Breast epithelium (tissue), 4 donors: ENCODE measurements at regions of chr14 and their contacts with region 1.

Region 1: GRCh38 chr14:73785873-73786695 is 65.5 kb upstream of the PTGR2 start:
- DNase-seq: peak; percentile 70 to 76
- H3K4me3 ChIP-seq: peak overlapping the region; percentile 73 to 80 (median 76)
- H3K27ac ChIP-seq: peak overlapping the region; percentile 97 to 98
- H3K4me1 ChIP-seq: peaks cover 30 to 45% of the 10 kb centered on the region in 2 donors
- H3K27me3 ChIP-seq: no peaks in the 10 kb centered on the region
- CTCF ChIP-seq: peak; percentile 60 to 75 (median 60)
- POLR2A ChIP-seq: peak; percentile 74

Region 2: DNA sequence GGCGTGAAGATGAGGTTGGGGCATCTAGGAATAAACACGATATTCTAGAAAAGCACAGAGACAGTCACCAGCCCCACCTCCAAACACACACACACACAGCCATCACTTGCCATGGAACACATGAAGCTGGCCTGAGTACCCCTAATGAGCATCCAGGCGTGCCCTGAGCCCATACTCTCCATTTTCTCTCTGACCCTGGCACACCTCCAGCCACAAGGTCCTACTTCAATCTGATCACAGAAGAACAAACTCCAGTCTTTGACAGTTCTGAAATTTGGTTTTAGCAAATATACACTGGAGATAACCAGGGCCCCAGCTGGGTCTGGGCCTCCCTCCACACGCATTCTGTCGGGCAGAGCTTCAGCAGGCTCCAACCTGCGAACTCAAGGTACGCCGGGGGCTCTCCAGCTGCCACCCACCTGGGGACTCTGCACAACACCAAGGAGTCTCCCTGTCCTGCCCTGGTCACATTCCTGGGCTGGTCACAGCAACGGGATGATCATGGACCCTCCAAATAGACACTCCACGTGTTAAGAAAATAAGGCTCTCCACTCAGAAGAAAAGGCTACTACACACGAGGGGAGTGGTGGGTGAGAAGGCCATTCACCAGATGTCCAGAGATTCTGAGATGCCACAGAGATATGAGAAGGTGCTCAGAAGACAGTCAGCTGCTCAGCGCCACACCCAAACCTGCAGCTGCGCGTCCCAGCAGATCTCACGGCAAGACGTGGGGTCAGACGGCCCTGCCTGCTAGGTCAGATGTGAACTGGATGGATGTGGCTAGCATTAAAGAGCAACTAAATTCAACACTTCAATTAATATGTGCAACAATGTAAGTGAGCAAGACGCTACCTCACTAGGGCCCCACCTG is 14.9 kb before region 1 on chr14:
- intact Hi-C with region 1: loop called (anchors 1 kb)
- DNase-seq: no peak
- H3K4me3 ChIP-seq: no peak overlapping the region
- H3K27ac ChIP-seq: peak overlapping the region; percentile 70 to 76
- H3K4me1 ChIP-seq: peaks cover 4 to 29% of the 10 kb centered on the region in 2 donors
- H3K27me3 ChIP-seq: no peaks in the 10 kb centered on the region
- CTCF ChIP-seq: no peak
- POLR2A ChIP-seq: no peak